Right ventricle myocardium inferior (tissue), 1 donor: ENCODE measurements at regions of chr12 and their contacts with region 1.

Region 1: GRCh38 chr12:6285063-6285477 is 25.4 kb upstream of the PLEKHG6 start:
- DNase-seq: peak; percentile 84
- ATAC-seq: peak; percentile 86

Region 2: DNA sequence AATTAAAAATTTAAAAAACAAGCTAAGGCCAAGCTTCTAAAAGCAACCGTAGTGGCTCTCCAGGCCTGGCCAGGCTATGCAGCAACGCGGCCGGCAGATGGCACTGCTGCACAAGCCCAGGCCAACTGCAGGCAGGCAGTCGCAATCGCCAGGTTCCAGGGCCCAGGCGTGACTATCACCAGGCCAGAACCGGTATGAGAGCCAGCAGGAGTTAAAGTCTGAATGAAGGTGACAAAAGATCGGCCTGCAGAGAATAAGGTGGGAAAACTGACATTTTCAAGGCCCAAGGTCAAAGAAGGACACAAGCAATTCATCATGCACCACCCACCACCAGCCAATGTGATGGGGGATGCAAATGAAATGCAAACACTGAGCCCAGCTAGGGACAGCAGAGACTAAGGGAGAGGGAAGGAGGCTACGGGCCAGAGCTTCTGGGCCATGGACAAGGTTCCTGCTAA is 296.4 kb before region 1 on chr12:
- intact Hi-C with region 1: loop called (anchors 2 kb)
- DNase-seq: peak; percentile 92
- ATAC-seq: peak; percentile 90

Region 3: DNA sequence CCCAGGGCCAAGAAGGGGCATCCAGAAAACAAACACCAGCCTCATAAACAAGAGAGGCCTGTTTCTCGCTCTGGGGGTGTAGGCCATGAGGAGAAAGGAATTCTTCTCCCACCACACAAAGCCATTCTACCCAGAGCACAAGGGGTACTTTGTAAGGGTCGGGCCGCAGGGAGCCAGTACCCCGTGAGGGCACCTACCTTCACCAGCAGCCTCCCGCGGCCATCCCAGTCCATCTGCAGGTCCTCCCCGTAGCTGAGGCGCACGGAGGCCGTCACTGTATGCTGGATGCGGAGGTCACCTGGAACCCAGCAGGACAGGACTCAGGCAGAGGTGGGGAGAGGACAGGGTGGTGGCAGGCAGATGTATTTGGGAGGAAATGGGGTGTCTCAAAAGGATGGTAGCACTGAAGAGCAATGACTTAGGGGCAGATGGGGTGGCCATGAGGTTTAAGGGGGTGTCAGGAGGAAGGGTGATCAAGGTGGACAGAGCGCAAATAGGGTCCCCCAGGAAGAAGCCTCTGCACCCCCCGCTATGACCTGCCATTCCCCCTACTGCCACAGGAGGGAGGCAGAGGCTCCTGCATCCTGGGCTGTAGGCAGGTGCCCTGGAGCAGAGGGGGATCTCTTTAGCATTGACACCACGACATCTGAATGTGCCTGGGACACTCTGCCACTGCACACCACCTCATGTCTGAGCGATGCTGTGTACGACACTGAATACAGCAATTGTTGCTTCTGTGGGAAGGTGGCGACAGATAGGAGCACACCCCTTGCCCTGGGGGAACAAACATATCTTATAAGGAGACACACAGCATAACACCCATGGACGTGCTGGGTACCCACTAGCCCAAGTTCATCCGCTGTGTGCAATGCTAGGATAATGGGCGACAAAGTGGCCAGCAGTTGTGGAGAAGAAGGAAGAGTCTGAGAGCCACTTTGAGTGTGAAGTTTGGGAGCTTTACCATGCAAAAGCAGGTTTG is 222.0 kb before region 1 on chr12:
- intact Hi-C with region 1: loop called (anchors 2 kb)
- DNase-seq: no peak
- ATAC-seq: peak; percentile 47

Region 4: DNA sequence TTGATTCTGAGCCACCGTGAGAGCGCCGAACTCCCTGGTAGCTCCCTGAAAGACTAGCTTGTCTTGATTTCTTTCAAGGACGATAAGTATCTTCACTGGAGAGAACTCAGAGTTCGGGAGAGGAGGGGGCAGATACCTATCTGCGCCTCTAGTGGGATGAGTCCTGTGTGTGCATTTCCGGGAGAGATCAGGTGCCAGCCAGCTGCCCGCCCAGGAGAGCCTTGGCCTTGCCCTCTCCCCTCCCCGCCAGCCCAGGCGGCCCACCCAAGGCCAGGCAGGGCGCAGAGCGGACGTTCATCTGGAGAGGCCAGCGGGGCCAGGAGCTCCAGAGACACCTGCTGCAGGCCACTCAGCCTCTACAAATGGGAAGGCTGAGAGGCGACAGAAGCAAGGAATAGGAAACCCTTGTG is 83.9 kb before region 1 on chr12:
- intact Hi-C with region 1: no loop called
- DNase-seq: no peak
- ATAC-seq: no peak

Region 5: DNA sequence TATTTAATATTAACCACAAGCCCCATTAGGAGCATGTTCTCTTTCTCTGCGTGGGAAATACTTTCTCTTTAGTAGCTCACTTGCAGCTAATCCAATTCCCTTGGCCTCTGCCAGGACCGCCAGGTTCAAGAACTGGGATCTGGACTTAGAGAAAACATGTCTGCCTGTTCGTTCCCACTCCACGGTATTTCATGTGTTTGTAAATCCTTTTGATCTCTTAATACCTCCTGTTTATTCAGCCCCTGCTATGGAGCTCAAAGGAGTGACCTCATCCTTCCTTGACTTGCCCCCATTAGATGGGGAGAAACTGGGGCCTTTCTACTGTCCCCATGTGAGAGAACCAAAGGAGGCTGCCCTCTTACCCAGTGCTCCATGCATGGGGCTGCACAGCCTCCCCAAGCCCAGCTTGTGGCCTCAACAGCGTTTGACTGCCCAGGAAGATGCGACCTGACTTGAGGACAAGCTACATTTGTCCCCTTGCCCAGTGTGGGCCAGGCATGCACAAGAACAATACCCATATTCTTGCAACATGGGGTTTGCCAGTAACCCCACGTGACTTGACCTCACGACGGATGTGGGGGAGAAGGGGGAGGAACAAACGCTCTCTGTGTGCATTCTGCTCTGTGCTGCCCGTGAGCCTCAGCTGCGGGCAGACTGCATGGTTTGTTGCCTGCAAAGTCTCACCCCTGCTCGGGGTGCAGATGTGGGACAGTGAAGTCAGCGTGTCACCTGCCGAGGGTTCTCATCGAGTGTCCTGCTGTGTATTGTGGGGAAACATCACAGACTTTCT is 54.6 kb before region 1 on chr12:
- intact Hi-C with region 1: no loop called
- DNase-seq: peak; percentile 82
- ATAC-seq: peak; percentile 7